Body of pancreas (tissue), 4 donors: ENCODE measurements at regions of chr10 and their contacts with region 1.

Region 1: GRCh38 chr10:132654702-132655661 is 117.4 kb downstream of the INPP5A start:
- DNase-seq: peak; percentile 48 to 67 (median 58)
- ATAC-seq: peak; percentile 55
- H3K4me3 ChIP-seq: no peak overlapping the region
- H3K27ac ChIP-seq: no peak overlapping the region
- H3K4me1 ChIP-seq: peaks cover 41% of the 10 kb centered on the region
- H3K27me3 ChIP-seq: no peaks in the 10 kb centered on the region
- CTCF ChIP-seq: peak; percentile 85 to 95 (median 90)
- POLR2A ChIP-seq: no peak

Region 2: DNA sequence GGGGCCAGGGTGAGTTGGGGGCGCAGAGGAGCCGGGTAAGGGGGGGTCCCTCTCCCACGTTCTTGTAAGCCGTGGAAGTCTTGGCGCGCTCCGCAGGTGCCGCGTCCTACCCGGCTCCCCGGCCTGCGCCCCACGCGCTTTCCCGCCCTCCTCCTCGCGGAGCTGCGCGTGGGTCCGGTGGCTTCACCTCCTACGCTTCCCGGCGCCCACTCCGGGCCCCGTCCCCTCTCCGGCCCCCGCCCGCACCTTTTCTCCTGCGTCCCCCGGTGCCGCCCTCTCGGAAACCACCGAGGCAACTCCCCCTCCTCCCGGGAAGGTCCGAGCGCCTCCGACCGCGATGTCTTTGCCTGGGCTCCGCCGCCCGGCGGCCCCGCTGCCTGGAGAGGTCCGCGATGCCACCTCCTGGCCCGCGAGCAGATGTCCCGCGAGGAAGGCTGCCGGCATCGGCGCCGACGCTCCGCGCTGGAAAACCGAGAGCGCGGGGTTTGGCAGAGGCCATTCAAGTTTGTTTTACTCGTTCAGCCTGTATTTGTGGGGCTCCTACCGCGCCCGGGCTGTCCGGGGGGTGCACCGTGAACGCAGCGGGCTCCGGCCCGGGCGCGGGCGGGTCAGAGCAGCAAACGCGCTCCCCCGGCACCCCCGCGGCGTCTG is 133.3 kb after region 1 on chr10:
- intact Hi-C with region 1: loop called (anchors 10 kb)
- DNase-seq: no peak
- ATAC-seq: no peak
- H3K4me3 ChIP-seq: no peak overlapping the region
- H3K27ac ChIP-seq: no peak overlapping the region
- H3K4me1 ChIP-seq: peaks cover 26% of the 10 kb centered on the region
- H3K27me3 ChIP-seq: peaks cover 0 to 33% of the 10 kb centered on the region in 2 donors
- CTCF ChIP-seq: peak in 4 of 7 experiments; percentile 10 to 36 (median 29)
- POLR2A ChIP-seq: no peak